ENCODE measurements at regions of chr22 and their contacts with region 1.

Region 1: GRCh38 chr22:19495562-19496323 is 16.0 kb downstream of the CDC45 start:
- DNase-seq: no peak
- H3K4me3 ChIP-seq: no peak overlapping the region
- H3K27ac ChIP-seq: no peak overlapping the region
- H3K4me1 ChIP-seq: no peaks in the 10 kb centered on the region
- H3K27me3 ChIP-seq: no peaks in the 10 kb centered on the region
- CTCF ChIP-seq: peak in 1 of 6 experiments; percentile 15
- POLR2A ChIP-seq: no peak

Region 2: GRCh38 chr22:19097518-19097917 is 398.2 kb before region 1 on chr22:
- intact Hi-C with region 1: no loop called
- DNase-seq: peak in 1 of 7 donors; percentile 38
- H3K4me3 ChIP-seq: no peak overlapping the region
- H3K27ac ChIP-seq: no peak overlapping the region
- H3K4me1 ChIP-seq: peaks cover 0 to 6% of the 10 kb centered on the region in 2 donors
- H3K27me3 ChIP-seq: no peaks in the 10 kb centered on the region
- CTCF ChIP-seq: no peak
- POLR2A ChIP-seq: no peak

Region 3: GRCh38 chr22:19398206-19398605 is 97.5 kb before region 1 on chr22:
- intact Hi-C with region 1: no loop called
- DNase-seq: peak in 1 of 7 donors; percentile 43
- H3K4me3 ChIP-seq: no peak overlapping the region
- H3K27ac ChIP-seq: no peak overlapping the region
- H3K4me1 ChIP-seq: peaks cover 0 to under 1% of the 10 kb centered on the region in 2 donors
- H3K27me3 ChIP-seq: no peaks in the 10 kb centered on the region
- CTCF ChIP-seq: no peak
- POLR2A ChIP-seq: no peak

Region 4: GRCh38 chr22:19705181-19705934 is 209.6 kb after region 1 on chr22:
- intact Hi-C with region 1: loop called in 1 of 2 experiments (anchors 5 kb)
- DNase-seq: peak in 1 of 7 donors; percentile 38
- H3K4me3 ChIP-seq: no peak overlapping the region
- H3K27ac ChIP-seq: no peak overlapping the region
- H3K4me1 ChIP-seq: no peaks in the 10 kb centered on the region
- H3K27me3 ChIP-seq: no peaks in the 10 kb centered on the region
- CTCF ChIP-seq: no peak
- POLR2A ChIP-seq: no peak

Measured in adrenal gland (tissue), 19 donors.